ENCODE measurements at regions of chr5 and their contacts with region 1.

Region 1: GRCh38 chr5:1385395-1386273 is 40.7 kb upstream of the CLPTM1L start:
- DNase-seq: peak; percentile 72 to 88 (median 78)
- H3K4me3 ChIP-seq: peak overlapping the region; percentile 70
- H3K4me3 Mint-ChIP-seq: peak overlapping the region; percentile 92 to 100 (median 98)
- H3K27ac ChIP-seq: peak overlapping the region; percentile 84
- H3K27ac Mint-ChIP-seq: peak overlapping the region; percentile 94 to 100 (median 99)
- H3K4me1 ChIP-seq: peaks cover 21% of the 10 kb centered on the region
- H3K4me1 Mint-ChIP-seq: peaks cover 29 to 38% (median 34%) of the 10 kb centered on the region in 3 donors
- H3K27me3 ChIP-seq: no peaks in the 10 kb centered on the region
- H3K27me3 Mint-ChIP-seq: peaks cover 0 to 3% of the 10 kb centered on the region in 2 donors

Region 2: GRCh38 chr5:1344975-1345838 is 40.4 kb before region 1 on chr5 and contains the start of gene CLPTM1L:
- CTCF ChIA-PET with region 1: interaction called, 5 read pairs
- POLR2A ChIA-PET with region 1: interaction called, 17 read pairs
- DNase-seq: peak; percentile 85 to 91 (median 89)
- H3K4me3 ChIP-seq: peak within 1 kb of the TSS; percentile 58
- H3K4me3 Mint-ChIP-seq: peak within 1 kb of the TSS; percentile 85 to 95 (median 92)
- H3K27ac ChIP-seq: peak within 1 kb of the TSS; percentile 71
- H3K27ac Mint-ChIP-seq: peak within 1 kb of the TSS; percentile 81 to 95 (median 92)
- H3K4me1 ChIP-seq: peaks cover 32% of the 10 kb centered on the region
- H3K4me1 Mint-ChIP-seq: peaks cover 27 to 35% (median 34%) of the 10 kb centered on the region in 3 donors
- H3K27me3 ChIP-seq: no peaks in the 10 kb centered on the region
- H3K27me3 Mint-ChIP-seq: no peaks in the 10 kb centered on the region
- total RNA-seq, gene CLPTM1L: 109 to 110 TPM

Region 3: DNA sequence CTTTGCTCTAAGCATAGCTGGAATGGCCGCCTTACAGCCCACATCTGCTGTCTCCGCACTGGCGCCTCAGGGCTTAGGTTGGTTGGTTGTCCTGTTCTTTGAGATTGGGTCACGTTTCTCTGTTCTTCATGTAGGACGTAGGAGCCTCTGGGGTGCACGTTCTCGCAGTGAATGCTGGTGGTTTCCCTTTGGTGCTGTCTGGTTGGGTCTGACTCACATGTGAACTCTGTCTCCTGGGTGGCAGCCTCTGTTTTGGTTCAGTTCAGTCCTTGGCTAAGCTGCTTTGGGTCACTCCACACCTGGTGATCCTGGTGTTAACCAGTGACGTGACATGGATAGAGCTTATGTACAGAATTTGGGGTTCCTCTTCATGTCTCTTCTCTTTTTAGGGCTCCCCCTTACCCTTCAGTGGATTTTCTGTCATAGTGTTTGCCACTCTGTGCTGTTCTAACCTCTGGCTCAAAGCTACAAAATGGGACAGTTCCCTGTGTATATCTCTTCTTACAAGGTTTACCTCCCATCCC is 150.8 kb after region 1 on chr5:
- CTCF ChIA-PET with region 1: no interaction called
- POLR2A ChIA-PET with region 1: interaction called, 12 read pairs
- DNase-seq: peak; percentile 60 to 87 (median 69)
- H3K4me3 ChIP-seq: peak overlapping the region; percentile 51
- H3K4me3 Mint-ChIP-seq: peak overlapping the region; percentile 28 to 90 (median 84)
- H3K27ac ChIP-seq: peak overlapping the region; percentile 74
- H3K27ac Mint-ChIP-seq: peak overlapping the region; percentile 93 to 99 (median 95)
- H3K4me1 ChIP-seq: peaks cover 26% of the 10 kb centered on the region
- H3K4me1 Mint-ChIP-seq: peaks cover 29 to 38% (median 34%) of the 10 kb centered on the region in 3 donors
- H3K27me3 ChIP-seq: no peaks in the 10 kb centered on the region
- H3K27me3 Mint-ChIP-seq: peaks cover 0 to 3% of the 10 kb centered on the region in 2 donors

Measured in CD8-positive, alpha-beta memory T cell (primary cell).